ENCODE measurements at regions of chr19 and their contacts with region 1.

Region 1: DNA sequence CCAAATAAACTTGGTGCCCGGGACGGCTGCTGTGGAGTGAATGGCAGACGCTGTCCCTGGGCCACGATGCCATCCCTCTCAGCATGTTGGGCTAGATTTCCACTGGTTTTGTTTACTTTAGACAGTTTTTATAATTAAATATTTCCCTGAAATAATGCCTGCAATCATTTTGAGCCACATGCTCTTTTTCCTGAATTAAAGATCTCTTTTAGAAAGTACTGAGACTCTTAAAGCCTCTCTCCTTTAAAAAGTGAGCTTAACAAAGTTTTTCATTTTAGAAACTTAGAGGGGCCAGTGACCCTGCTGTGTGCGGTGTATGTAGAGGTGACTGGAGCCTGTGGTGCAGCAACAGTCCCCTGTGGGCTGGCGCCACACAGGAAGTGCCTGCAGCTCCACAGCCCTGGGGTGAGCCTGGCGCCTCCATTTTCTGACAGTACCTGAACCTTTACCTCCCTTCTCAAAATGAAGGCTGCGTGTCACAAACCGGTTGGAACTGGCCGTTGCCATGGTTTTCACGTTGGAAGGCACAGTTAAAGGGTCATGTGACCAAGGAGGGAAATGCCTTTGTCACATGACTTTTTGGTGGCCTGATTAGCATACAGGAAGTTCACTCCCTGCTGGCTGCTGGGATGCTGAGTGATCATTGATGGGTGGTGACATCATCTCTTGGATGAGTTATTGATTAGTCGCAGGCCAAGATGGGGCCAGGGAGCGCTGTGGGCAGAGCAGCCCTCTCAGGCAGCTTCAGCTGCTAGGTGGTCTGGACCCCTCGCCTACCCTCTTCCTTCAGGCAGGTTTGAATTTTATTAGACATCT is 26.3 kb downstream of the TSSK6 start:
- DNase-seq: peak; percentile 78 to 99 (median 87)
- ATAC-seq: peak; percentile 89
- H3K4me3 ChIP-seq: peak overlapping the region; percentile 11
- H3K4me3 Mint-ChIP-seq: peak overlapping the region; percentile 32
- H3K27ac ChIP-seq: peak overlapping the region; percentile 86 to 96
- H3K27ac Mint-ChIP-seq: peak overlapping the region; percentile 99
- H3K4me1 ChIP-seq: peaks cover 64% of the 10 kb centered on the region
- H3K4me1 Mint-ChIP-seq: peaks cover 55% of the 10 kb centered on the region
- H3K27me3 ChIP-seq: no peaks in the 10 kb centered on the region
- H3K27me3 Mint-ChIP-seq: no peaks in the 10 kb centered on the region
- CTCF ChIP-seq: no peak

Region 2: GRCh38 chr19:19185853-19186740 is 303.0 kb before region 1 on chr19:
- CTCF ChIA-PET with region 1: interaction called, 3 read pairs
- POLR2A ChIA-PET with region 1: no interaction called
- intact Hi-C with region 1: loop called in 1 of 2 experiments (anchors 5 kb)
- DNase-seq: peak; percentile 43 to 81 (median 54)
- ATAC-seq: peak; percentile 90
- H3K4me3 ChIP-seq: no peak overlapping the region
- H3K4me3 Mint-ChIP-seq: peak overlapping the region; percentile 34
- H3K27ac ChIP-seq: no peak overlapping the region
- H3K27ac Mint-ChIP-seq: no peak overlapping the region
- H3K4me1 ChIP-seq: peaks cover 25% of the 10 kb centered on the region
- H3K4me1 Mint-ChIP-seq: peaks cover 29% of the 10 kb centered on the region
- H3K27me3 ChIP-seq: no peaks in the 10 kb centered on the region
- H3K27me3 Mint-ChIP-seq: no peaks in the 10 kb centered on the region
- CTCF ChIP-seq: peak; percentile 58

Region 3: DNA sequence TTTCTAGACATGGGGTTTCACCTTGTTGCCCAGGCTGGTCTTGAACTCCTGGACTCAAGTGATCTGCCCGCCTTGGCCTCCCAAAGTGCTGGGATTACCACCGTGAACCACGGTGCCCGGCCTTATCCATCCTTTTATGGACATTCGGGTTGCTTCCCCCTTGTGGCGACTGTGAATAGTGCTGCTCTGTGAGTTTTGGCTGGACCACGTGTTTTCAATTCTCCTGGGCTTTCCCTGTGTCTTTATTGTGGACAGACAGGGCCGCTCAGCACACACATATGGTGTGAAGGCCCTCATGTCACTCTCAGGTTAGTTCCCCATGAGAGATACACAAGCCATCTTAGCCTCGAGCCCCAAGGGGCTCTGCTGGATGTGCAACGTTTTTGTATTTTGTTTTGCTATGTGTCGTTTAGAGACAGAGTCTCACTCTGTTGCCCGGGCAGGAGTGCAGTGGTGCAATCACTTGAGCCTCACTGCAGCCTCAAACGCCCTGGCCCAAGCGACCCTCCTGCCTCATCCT is 127.9 kb before region 1 on chr19:
- CTCF ChIA-PET with region 1: interaction called, 33 read pairs
- POLR2A ChIA-PET with region 1: interaction called, 81 read pairs
- intact Hi-C with region 1: loop called in 1 of 2 experiments (anchors 1 kb)
- DNase-seq: peak; percentile 31 to 88 (median 60)
- ATAC-seq: peak; percentile 57
- H3K4me3 ChIP-seq: no peak overlapping the region
- H3K4me3 Mint-ChIP-seq: peak overlapping the region; percentile 57
- H3K27ac ChIP-seq: no peak overlapping the region
- H3K27ac Mint-ChIP-seq: peak overlapping the region; percentile 75
- H3K4me1 ChIP-seq: peaks cover 45% of the 10 kb centered on the region
- H3K4me1 Mint-ChIP-seq: peaks cover 42% of the 10 kb centered on the region
- H3K27me3 ChIP-seq: no peaks in the 10 kb centered on the region
- H3K27me3 Mint-ChIP-seq: no peaks in the 10 kb centered on the region
- CTCF ChIP-seq: peak; percentile 79

Region 4: DNA sequence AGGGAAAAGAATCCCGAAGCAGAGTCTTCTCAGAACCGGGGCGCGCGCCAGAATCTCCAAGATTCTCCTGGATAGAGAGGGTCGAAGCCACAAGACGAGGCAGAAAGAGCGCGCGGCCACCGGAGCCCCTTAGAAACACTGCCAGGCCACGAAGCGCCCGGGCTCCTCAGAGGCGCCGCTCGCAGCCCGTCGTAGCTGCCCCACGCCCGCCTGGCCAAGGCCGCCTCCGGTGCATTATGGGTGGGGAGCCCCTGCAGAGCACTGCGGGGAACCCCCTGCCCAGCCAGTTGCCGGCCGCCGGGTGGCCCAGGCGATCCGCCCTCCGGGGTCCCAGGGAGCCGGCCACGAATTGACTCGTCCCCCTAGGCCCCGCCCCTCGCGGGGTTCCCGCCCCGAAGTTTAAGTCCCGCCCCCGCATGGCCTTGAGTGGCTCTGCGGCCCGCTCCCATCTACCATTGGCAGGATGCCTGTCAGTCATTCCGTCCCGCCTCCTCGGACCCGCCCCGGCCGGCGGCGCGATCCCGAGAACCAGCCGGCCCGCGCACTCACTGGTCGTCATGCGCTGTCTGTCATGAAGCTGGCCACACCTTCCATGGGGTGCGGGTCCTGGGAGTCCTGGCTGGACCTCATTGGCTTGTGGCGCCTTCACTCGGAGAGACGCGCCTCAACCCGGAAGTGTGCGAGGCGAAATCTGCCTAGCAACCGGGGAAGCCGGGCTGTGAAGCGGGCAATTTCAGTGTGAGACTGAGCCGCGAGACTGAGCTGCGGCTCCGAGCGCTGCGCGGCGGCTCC is 103.8 kb before region 1 on chr19:
- CTCF ChIA-PET with region 1: interaction called, 9 read pairs
- POLR2A ChIA-PET with region 1: interaction called, 9 read pairs
- intact Hi-C with region 1: loop called (anchors 1 to 5 kb)
- DNase-seq: peak; percentile 97 to 100 (median 99)
- ATAC-seq: peak; percentile 89
- H3K4me3 ChIP-seq: peak overlapping the region; percentile 92
- H3K4me3 Mint-ChIP-seq: peak overlapping the region; percentile 99
- H3K27ac ChIP-seq: peak overlapping the region; percentile 64 to 77
- H3K27ac Mint-ChIP-seq: peak overlapping the region; percentile 94
- H3K4me1 ChIP-seq: peaks cover 52% of the 10 kb centered on the region
- H3K4me1 Mint-ChIP-seq: peaks cover 44% of the 10 kb centered on the region
- H3K27me3 ChIP-seq: no peaks in the 10 kb centered on the region
- H3K27me3 Mint-ChIP-seq: no peaks in the 10 kb centered on the region
- CTCF ChIP-seq: no peak

Region 5: GRCh38 chr19:19515764-19516519 is 26.9 kb after region 1 on chr19 and contains the start of gene NDUFA13:
- CTCF ChIA-PET with region 1: no interaction called
- POLR2A ChIA-PET with region 1: interaction called, 13 read pairs
- intact Hi-C with region 1: no loop called
- DNase-seq: peak; percentile 84 to 97 (median 92)
- ATAC-seq: peak; percentile 87
- H3K4me3 ChIP-seq: peak within 1 kb of the TSS; percentile 77
- H3K4me3 Mint-ChIP-seq: peak within 1 kb of the TSS; percentile 94
- H3K27ac ChIP-seq: peak within 1 kb of the TSS; percentile 76 to 87
- H3K27ac Mint-ChIP-seq: peak within 1 kb of the TSS; percentile 86
- H3K4me1 ChIP-seq: peaks cover 46% of the 10 kb centered on the region
- H3K4me1 Mint-ChIP-seq: peaks cover 32% of the 10 kb centered on the region
- H3K27me3 ChIP-seq: no peaks in the 10 kb centered on the region
- H3K27me3 Mint-ChIP-seq: no peaks in the 10 kb centered on the region
- CTCF ChIP-seq: no peak
- total RNA-seq, gene NDUFA13: 145 to 156 TPM

Measured in CD4-positive, alpha-beta T cell (primary cell).